Posterior vena cava (tissue), 2 donors: ENCODE measurements at regions of chr15 and their contacts with region 1.

Region 1: GRCh38 chr15:73633111-73633990 is at the start of gene NPTN:
- DNase-seq: peak; percentile 100
- total RNA-seq, gene NPTN: 164 to 189 TPM

Region 2: GRCh38 chr15:72998226-72998625 is 635.1 kb before region 1 on chr15:
- intact Hi-C with region 1: no loop called
- DNase-seq: no peak

Region 3: DNA sequence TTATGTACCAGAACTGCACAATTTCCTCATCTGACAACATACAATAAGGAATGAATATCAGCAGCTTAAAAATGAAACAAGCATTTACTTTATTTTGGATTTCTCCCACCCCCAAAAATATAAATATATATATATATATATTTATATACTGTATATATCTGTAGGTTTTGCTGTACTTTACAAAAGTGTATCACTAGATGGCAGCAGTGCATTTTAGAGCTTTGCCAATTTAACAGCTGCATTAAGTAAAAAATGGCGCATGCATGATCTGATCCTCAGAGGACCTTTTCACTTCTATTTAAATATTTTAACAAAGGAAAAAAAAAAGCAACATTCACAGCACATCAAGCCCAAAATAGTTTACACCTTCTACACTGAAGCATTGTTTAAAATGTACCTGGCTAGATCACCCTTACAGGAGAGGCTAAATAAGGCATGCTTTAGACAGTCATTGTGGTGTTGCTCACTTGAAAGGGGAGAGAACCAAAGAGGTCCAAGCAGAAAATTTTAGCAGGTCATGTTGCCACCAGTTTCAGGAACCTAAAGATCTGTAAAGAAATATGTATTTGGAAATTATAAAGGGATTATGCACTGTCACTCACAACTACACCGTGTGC is 72.7 kb before region 1 on chr15:
- intact Hi-C with region 1: loop called in 1 of 2 experiments (anchors 5 kb)
- DNase-seq: no peak

Region 4: GRCh38 chr15:73573572-73573971 is 59.8 kb before region 1 on chr15:
- intact Hi-C with region 1: loop called in 1 of 2 experiments (anchors 10 kb)
- DNase-seq: no peak

Region 5: GRCh38 chr15:73599934-73600333 is 33.4 kb before region 1 on chr15:
- intact Hi-C with region 1: loop called (anchors 5 kb)
- DNase-seq: no peak

Region 6: DNA sequence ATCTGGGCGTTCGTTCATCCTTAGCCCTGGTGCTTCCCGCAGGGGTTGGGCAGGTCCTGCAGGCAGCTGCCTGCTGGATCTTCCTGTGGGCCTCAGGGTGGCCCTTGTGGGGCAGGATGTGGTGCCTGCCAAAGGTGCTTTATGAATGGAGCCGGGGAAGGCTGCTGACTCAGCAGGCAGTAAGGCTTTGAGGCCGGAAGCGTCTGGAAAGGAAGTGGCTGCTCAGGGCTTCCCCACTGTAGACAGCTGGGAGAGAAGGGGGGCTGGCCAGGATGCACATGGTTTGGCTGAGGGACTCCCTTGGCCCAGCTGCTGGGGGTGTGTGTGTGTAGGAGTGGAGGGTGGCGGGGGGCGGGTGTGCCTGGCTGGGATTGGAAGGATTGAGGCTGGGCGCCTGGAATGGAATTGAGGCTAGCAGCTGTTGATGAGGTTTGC is 63.7 kb after region 1 on chr15:
- intact Hi-C with region 1: loop called in 1 of 2 experiments (anchors 5 kb)
- DNase-seq: peak; percentile 95

Region 7: GRCh38 chr15:74816808-74817674 is 1183.7 kb after region 1 on chr15:
- intact Hi-C with region 1: no loop called
- DNase-seq: no peak